Aorta (tissue), 5 donors: ENCODE measurements at regions of chr10 and their contacts with region 1.

Region 1: GRCh38 chr10:3935141-3935540 is 150.1 kb upstream of the KLF6 start:
- DNase-seq: peak in 1 of 2 donors; percentile 63
- ATAC-seq: peak; percentile 78
- H3K4me3 ChIP-seq: peak overlapping the region in 1 of 2 donors; percentile 13
- H3K27ac ChIP-seq: peak overlapping the region; percentile 72 to 74
- H3K4me1 ChIP-seq: peaks cover 2 to 11% of the 10 kb centered on the region in 2 donors
- H3K27me3 ChIP-seq: no peaks in the 10 kb centered on the region

Region 2: DNA sequence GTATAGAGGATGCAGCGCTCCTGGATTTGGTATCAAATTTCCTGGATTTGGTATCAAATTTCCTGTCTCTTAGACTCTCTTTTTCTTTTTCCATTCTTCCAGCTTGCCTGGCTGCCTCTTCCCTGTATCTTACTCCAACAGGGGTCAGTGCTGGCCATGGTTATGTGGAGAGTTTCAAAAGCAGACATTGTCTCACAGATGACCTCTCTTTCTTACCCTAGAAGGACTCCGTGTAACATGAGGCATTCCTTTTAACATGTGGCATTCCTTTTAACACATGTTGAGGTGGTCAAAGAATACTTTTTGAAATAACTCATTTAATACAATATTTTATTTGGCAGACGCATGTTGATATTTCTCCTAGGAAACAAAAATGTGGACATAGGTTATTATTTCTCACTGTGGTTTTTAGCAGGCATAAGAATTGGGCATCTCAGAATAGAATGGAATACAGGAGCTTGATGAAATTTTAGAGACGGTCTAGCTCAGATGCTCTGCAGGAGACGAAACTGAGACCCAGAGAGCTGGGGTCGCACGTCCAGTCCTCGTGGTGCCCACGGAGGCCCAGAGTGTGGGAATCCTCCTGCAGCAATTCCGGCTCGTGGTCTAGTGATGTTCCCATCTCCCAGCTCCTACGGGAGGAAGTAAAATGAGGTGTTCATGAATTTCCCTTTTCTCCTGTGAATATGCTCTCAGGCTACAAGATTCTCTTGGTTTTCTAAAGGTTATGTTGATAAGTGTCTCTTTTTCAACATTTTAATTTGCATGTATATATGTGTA is 703.0 kb before region 1 on chr10:
- intact Hi-C with region 1: loop called in 1 of 2 experiments (anchors 5 kb)
- DNase-seq: peak in 1 of 2 donors; percentile 74
- ATAC-seq: peak; percentile 71
- H3K4me3 ChIP-seq: no peak overlapping the region
- H3K27ac ChIP-seq: peak overlapping the region; percentile 29 to 86
- H3K4me1 ChIP-seq: no peaks in the 10 kb centered on the region
- H3K27me3 ChIP-seq: no peaks in the 10 kb centered on the region

Region 3: DNA sequence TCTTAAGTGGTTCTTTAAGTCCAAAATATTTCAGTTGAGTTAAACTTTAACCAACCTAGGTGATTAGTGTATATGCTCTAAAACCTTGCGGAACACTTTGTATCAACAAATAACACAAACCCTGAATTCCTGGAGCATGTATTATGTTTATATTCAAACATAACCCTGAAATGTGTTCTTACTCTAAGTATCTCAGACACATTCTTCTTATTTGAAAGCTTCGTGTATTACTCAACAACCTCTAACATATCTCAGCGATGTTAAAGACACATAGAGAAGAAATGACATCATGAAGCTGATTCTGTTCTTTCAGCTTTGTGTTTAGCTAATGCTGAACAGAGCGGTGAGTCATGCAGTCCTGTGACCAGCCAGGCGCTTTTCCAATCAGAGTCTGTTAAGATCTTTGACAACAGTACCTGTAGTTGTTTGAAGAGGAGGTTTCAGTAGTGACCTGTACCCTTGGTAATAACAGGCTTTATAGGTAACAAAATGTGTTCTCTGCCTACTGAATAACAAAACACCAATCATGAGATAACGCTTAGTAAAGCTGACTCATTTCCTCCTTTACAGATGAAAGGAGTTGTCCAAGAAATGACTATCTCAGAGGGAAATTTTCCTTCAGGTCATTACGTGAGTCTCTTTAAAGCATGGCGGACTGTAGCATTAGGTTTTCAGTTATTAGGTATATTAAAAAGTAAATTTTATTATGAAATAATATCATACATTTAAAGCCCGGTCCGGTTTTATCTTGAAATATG is 82.8 kb before region 1 on chr10:
- intact Hi-C with region 1: loop called in 1 of 2 experiments (anchors 5 kb)
- DNase-seq: peak; percentile 84 to 85
- ATAC-seq: peak; percentile 92
- H3K4me3 ChIP-seq: no peak overlapping the region
- H3K27ac ChIP-seq: peak overlapping the region; percentile 20 to 73
- H3K4me1 ChIP-seq: peaks cover 0 to 5% of the 10 kb centered on the region in 2 donors
- H3K27me3 ChIP-seq: no peaks in the 10 kb centered on the region

Region 4: GRCh38 chr10:3887885-3888476 is 47.2 kb before region 1 on chr10:
- intact Hi-C with region 1: loop called in 1 of 2 experiments (anchors 5 kb)
- DNase-seq: peak; percentile 87 to 90
- ATAC-seq: peak; percentile 52
- H3K4me3 ChIP-seq: no peak overlapping the region
- H3K27ac ChIP-seq: peak overlapping the region; percentile 92 to 100
- H3K4me1 ChIP-seq: peaks cover 3 to 5% of the 10 kb centered on the region in 2 donors
- H3K27me3 ChIP-seq: no peaks in the 10 kb centered on the region

Region 5: DNA sequence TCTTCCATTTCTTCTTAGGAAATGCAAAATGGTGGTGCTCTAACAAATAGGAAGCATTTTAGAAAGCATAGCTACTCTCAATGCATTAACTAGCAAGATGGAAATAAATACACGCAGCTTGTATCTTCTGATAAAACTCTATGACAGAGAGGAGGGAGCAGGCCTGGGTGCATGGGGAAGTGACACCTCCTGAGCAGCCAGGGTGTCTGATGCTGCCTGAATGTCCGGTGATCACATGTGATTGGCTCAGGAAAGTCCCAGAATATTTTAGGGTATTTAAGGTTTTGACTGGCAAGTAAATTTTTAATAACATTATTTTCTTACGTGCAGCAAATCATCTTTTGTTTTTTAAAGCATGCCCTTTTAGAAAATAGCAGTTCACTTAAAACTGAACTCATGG is 110.9 kb after region 1 on chr10:
- intact Hi-C with region 1: loop called in 1 of 2 experiments (anchors 5 kb)
- DNase-seq: no peak
- ATAC-seq: no peak
- H3K4me3 ChIP-seq: no peak overlapping the region
- H3K27ac ChIP-seq: no peak overlapping the region
- H3K4me1 ChIP-seq: no peaks in the 10 kb centered on the region
- H3K27me3 ChIP-seq: no peaks in the 10 kb centered on the region

Region 6: DNA sequence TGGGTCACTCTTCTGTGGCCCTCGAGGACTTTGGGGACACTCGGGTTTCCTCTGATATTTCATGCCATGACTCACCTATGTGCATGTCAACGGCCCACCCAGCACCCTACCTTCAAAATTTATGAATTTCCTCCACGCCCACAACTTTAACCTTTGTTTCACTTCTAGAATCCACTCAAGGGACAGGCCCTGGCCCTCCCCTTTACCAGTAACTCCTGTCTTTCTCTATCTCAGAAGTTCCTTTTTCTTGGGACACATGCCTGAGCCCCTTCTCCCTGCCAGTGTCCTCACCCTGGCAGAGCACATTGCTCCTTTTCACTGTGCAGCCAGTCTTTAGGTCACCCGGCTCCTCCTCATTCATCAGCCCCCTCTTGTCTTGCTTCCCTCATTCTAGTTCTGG is 132.4 kb after region 1 on chr10:
- intact Hi-C with region 1: no loop called
- DNase-seq: no peak
- ATAC-seq: no peak
- H3K4me3 ChIP-seq: no peak overlapping the region
- H3K27ac ChIP-seq: no peak overlapping the region
- H3K4me1 ChIP-seq: no peaks in the 10 kb centered on the region
- H3K27me3 ChIP-seq: no peaks in the 10 kb centered on the region

Region 7: DNA sequence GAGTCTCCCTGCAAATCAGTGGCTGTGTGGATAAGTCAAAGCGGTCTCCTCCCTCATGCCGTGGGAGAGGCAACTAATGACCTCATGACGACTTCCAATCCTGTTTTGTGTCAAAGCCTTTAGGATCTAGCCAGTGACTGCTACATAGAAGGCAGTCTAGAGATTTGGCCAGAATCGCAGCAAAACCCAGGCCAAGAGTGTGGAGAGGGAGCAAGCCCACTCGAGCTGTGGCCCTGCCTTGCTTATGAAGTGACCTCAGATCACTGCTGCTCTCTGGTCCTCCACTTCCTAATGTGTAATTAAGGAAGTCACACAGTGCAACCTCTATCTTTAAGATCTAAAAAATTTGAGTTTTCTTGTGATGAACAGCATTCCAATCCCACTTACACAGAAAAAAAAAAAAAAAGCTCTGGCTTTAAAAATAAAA is 146.6 kb after region 1 on chr10:
- intact Hi-C with region 1: no loop called
- DNase-seq: peak in 1 of 2 donors; percentile 64
- ATAC-seq: peak; percentile 49
- H3K4me3 ChIP-seq: no peak overlapping the region
- H3K27ac ChIP-seq: peak overlapping the region in 1 of 2 donors; percentile 13
- H3K4me1 ChIP-seq: peaks cover 4 to 10% of the 10 kb centered on the region in 2 donors
- H3K27me3 ChIP-seq: no peaks in the 10 kb centered on the region